Activated T-helper 1 cell treated with anti-CD3 and anti-CD28 coated beads, Interleukin-12 subunit alpha, Interleukin-12 subunit beta, Interleukin-2, Interleukin-4 antibody, amounts not matched to agents 30 ng/mL and 10 ng/mL and 1 ng/mL, durations not matched to agents 14 hours and 24 hours and 36 hours (primary cell): ENCODE measurements at regions of chr6 and their contacts with region 1.

Region 1: DNA sequence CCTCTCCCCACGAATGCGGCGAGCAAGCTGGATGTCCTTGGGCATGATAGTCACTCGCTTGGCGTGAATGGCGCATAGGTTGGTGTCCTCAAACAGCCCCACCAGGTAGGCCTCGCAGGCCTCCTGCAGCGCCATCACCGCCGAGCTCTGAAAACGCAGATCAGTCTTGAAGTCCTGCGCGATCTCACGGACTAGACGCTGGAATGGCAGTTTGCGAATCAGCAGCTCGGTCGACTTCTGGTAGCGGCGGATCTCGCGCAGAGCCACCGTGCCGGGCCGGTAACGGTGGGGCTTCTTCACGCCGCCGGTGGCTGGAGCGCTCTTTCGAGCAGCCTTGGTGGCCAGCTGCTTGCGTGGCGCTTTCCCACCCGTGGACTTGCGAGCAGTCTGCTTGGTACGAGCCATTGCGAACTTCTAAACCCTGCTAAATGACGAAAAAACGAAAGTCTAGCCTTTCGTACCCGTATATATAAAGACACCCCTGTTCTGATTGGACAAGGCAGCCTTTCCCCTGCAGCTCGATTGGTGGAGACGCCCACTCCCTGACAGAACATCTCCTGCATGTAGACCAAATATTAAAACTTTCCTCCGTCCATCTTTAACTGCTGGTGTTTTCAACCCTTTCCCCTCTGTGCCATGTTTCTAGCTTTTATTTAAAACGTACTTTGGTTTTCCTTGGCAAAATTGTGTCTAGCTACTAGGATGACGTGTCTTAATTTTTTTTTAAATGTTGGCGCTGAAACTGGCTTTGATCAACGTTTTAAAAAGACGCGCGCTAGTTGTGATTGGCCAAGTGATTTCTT is 109.8 kb downstream of the HFE start:
- DNase-seq: peak; percentile 84
- H3K4me3 Mint-ChIP-seq: peak overlapping the region; percentile 92
- H3K27ac Mint-ChIP-seq: peak overlapping the region; percentile 95
- H3K4me1 Mint-ChIP-seq: peaks cover 54% of the 10 kb centered on the region
- H3K27me3 Mint-ChIP-seq: no peaks in the 10 kb centered on the region

Region 2: DNA sequence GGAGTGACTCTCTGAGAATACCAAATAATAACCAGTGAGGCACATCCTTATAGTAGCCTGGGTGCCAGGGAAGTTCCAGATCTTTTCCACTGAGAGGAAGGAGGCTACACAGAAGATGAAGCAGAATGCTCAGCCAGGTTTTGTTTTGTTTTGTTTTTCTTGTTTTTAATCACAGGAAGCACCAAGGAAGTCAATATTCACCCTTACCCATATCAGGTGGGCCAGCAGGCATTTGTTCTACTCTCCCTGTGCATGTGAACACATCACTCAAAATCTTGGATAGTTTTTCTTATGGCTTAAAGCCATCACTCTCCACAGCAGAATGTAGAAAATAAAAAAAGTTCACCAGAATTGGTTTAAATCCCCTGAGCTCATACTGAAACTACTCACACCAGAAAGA is 375.7 kb before region 1 on chr6:
- intact Hi-C with region 1: no loop called
- DNase-seq: no peak
- H3K4me3 Mint-ChIP-seq: no peak overlapping the region
- H3K27ac Mint-ChIP-seq: no peak overlapping the region
- H3K4me1 Mint-ChIP-seq: peaks cover 5% of the 10 kb centered on the region
- H3K27me3 Mint-ChIP-seq: peaks cover 15% of the 10 kb centered on the region

Region 3: DNA sequence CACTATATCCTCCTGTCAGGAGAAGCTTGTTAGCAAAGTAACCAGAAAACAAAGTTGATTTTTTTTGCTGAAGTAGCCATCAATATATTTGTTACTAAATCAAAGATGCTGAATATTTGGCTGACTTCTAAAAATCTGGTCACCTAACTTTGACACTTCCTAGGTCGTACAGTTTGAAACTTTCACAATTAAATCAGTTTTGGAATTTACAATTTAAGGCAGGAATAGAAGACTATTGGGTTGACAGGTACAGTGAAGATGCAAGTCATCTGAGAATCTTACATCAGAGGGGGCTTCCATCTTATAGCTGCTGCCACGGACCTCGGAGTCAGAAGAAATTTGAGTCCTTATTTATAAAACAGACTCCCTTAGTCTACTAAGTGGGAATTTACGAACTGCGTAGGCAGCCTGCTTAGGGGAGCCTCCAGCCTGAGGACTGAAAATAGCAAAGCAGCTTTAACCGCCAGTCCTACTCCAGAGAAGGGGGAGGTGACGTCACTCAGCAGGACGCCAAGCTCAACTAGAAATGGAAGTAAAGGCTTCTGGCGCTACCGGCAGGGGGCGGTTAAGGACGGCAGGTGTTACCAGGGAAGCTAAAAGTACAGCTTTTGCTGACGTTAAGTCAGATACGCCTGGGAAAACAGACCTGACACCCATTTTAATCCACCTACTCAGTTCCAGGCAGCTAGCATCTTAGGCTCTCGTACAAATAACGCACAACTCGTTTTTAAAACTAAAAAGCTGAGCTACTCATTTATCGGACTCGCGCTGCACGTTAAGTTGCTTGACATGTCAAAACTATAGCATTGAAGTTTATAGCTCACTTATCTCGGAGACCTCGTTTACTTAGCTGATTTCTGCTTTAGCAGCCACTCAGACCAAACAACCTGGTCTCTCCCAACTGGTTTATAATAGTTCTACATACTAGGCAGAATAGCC is 170.9 kb before region 1 on chr6:
- intact Hi-C with region 1: loop called (anchors 2 kb)
- DNase-seq: peak; percentile 88
- H3K4me3 Mint-ChIP-seq: peak overlapping the region; percentile 85
- H3K27ac Mint-ChIP-seq: peak overlapping the region; percentile 96
- H3K4me1 Mint-ChIP-seq: peaks cover 93% of the 10 kb centered on the region
- H3K27me3 Mint-ChIP-seq: no peaks in the 10 kb centered on the region

Region 4: DNA sequence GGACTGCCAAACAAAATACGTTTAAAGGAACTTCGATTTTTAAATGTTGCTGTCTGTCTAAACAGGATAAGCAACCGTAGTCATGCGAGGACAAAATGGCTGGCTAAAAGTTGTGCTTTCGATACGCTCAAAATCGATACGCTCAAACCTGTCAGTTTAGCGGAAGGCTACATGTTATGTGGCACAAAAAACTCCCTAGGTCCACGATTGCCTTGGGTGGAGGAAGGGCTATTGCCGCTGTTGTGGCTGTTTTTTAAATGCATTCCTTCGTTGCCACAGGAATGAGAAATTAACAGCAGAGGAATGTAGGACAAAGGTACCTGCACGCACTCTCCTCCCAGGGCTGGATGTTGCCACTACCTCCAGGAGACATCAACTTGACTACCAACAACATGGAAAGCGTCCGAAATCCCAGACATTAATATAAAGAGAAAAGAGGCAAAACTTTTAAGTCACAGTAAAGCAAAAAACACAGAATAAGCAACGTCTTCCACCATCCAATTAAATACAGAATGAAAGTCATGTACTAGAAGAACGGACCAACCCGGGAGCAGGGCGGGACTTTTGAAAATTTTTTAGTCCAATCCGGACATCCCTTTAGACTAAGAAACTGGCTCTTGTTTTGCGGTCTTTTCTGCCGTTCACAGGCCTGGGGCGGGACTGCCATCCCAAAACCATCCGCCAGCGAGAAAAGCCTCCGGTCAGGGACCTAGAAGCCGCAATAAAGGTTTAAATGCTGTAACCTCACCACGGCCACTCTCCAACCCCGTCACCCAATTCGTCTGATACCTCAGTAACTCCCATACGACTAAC is 142.0 kb before region 1 on chr6:
- intact Hi-C with region 1: loop called (anchors 5 kb)
- DNase-seq: peak; percentile 83
- H3K4me3 Mint-ChIP-seq: peak overlapping the region; percentile 91
- H3K27ac Mint-ChIP-seq: peak overlapping the region; percentile 99
- H3K4me1 Mint-ChIP-seq: peaks cover 42% of the 10 kb centered on the region
- H3K27me3 Mint-ChIP-seq: peaks cover 3% of the 10 kb centered on the region

Region 5: DNA sequence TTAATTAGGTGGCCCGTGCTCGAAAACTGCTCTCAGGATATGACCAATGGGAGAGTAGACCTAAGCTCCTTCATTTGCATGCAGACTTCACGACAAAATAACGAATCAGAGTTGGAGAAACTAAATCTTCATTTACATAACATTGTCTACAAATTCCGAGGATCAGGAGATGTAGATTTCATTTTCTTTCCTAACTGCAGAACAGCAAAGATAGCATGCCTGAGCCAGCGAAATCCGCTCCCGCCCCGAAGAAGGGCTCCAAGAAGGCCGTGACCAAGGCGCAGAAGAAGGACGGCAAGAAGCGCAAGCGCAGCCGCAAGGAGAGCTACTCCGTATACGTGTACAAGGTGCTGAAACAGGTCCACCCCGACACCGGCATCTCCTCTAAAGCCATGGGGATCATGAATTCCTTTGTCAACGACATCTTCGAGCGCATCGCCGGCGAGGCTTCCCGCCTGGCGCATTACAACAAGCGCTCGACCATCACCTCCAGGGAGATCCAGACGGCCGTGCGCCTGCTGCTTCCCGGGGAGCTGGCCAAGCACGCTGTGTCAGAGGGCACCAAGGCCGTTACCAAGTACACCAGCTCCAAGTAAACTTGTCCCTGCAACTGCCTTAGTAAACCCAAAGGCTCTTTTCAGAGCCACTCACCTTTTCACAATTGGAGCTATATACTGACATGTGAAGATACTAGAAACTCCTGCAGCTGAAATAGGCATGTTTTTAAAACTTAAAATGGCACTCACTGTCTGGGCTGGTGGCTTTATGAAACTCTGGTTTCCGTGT is 13.3 kb before region 1 on chr6:
- intact Hi-C with region 1: loop called (anchors 1 kb)
- DNase-seq: peak; percentile 71
- H3K4me3 Mint-ChIP-seq: peak overlapping the region; percentile 86
- H3K27ac Mint-ChIP-seq: peak overlapping the region; percentile 97
- H3K4me1 Mint-ChIP-seq: peaks cover 58% of the 10 kb centered on the region
- H3K27me3 Mint-ChIP-seq: no peaks in the 10 kb centered on the region

Region 6: DNA sequence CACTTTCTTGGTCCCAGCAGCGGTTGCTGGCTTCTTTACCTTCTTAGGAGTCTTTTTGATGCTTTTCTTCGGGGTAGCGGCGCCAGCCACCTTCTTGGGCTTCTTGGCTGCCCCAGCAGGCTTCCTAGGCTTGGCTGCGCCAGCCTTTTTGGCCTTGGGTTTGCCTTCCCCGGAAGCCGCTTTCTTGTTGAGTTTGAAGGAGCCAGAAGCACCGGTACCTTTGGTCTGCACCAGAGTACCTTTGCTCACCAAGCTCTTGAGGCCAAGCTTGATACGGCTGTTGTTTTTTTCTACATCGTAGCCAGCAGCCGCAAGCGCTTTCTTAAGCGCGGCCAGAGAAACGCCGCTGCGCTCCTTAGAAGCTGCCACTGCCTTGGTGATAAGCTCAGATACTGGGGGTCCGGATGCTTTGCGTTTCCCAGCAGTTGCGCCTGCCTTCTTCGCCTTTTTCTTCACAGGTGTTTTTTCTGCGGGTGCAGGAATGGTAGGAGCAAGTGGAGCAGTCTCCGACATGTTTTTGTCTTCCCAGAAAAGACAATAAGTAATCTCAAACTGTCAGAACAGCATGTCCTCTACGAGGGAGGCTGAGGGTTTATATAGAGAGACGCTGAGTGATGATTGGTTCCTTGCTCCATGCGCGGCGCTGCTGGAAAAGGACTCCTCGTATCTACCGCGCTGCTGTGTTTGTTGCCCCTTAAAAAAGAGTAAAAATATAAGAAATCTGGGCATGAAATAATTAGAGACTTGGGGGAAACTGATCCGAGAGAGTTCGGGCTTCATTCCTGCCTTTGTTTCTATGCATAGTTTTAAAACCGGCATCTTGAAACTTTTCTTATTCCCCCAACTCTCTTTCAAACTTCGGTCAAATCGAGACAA is 37.6 kb after region 1 on chr6:
- intact Hi-C with region 1: loop called (anchors 1 kb)
- DNase-seq: peak; percentile 79
- H3K4me3 Mint-ChIP-seq: peak overlapping the region; percentile 89
- H3K27ac Mint-ChIP-seq: peak overlapping the region; percentile 100
- H3K4me1 Mint-ChIP-seq: peaks cover 52% of the 10 kb centered on the region
- H3K27me3 Mint-ChIP-seq: no peaks in the 10 kb centered on the region

Region 7: GRCh38 chr6:27825025-27825793 is 1628.2 kb after region 1 on chr6:
- intact Hi-C with region 1: loop called (anchors 5 kb)
- DNase-seq: no peak
- H3K4me3 Mint-ChIP-seq: peak overlapping the region; percentile 89
- H3K27ac Mint-ChIP-seq: peak overlapping the region; percentile 96
- H3K4me1 Mint-ChIP-seq: peaks cover 46% of the 10 kb centered on the region
- H3K27me3 Mint-ChIP-seq: peaks cover 3% of the 10 kb centered on the region